ENCODE measurements at regions of chr1 and their contacts with region 1.

Region 1: DNA sequence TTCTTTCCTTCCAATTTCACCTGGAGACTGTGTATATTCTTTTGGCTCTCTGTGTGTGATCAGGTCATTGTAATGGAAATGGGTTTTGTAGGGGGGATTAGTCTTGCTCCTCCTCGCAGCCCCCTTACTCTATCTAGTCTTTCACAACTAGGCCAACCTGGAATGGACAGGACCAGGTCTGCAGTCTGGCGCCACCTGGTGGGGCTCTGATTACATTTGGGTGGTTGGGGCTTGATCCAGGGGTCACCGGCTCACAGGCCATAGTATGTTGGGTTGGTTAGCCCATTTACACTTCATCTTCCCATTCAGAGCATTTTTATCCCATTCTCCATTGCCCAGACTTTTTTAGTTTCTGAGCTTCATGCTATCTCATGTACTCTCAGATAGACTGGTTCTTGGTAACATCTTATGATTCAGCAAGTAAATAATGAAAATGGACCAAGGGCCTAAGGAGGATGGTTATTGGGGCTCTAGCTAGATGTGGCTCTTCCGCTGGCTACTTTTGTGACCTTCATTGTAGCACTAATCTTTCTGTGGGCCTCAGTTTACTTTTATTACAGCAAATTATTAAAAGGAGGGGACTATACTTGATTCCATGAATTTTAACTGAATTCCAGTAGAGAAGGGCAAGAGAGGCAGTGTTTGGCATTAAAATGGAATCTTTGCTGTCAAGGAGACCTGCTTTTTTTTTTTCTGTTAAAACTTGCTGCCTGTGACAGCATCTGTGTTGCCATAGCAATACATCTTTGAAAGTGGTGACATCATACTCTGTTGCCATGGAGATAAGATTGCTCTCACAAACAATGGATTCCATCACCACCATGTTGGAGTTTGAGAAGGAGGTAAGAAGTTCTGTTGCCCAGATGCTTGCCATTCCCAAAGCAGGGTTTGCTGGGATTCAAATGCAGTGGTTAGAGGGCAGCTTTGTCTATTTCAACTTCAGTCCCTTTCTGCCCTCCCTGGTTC is 150.1 kb downstream of the PLXNA2 start:
- DNase-seq: no peak
- ATAC-seq: peak; percentile 95
- H3K4me3 ChIP-seq: no peak overlapping the region
- H3K27ac ChIP-seq: no peak overlapping the region
- H3K4me1 ChIP-seq: no peaks in the 10 kb centered on the region
- H3K27me3 ChIP-seq: no peaks in the 10 kb centered on the region; a peak in 1 of 4 replicates
- CTCF ChIP-seq: peak; percentile 78 to 89 (median 88)
- EP300 ChIP-seq: no peak
- POLR2A ChIP-seq: no peak
- RAD21 ChIP-seq: peak; percentile 59

Region 2: DNA sequence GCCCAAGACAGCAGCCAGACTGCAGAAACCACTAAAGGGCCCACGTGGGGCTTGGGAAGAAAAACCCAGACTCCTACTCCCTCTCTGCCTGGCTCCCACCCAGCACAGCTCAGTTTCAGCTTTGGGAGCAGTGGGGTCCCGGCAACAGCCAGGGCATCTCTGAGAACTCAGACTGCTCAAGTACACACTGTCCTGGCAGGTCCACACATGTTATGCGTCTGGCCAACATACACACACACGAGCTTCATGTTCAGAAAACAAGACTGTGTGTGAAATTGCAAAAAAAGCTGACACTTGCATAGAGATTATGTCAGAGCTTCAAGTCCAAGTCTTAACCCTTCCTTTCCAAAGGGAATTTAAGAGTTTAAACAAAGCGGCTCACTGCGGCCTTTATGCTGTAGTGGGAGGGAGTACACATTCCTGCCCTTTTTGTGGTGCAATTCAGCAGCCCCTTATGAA is 46.5 kb before region 1 on chr1:
- CTCF ChIA-PET with region 1: interaction called, 12 read pairs
- POLR2A ChIA-PET with region 1: interaction called, 4 read pairs
- RAD21 ChIA-PET with region 1: no interaction called
- SMC1A ChIA-PET with region 1: no interaction called
- in situ Hi-C with region 1: no loop called
- intact Hi-C with region 1: no loop called
- DNase-seq: no peak
- ATAC-seq: no peak
- H3K4me3 ChIP-seq: no peak overlapping the region
- H3K27ac ChIP-seq: no peak overlapping the region
- H3K4me1 ChIP-seq: no peaks in the 10 kb centered on the region
- H3K27me3 ChIP-seq: peaks cover 0 to 6% of the 10 kb centered on the region in 2 experiments; a peak in 2 of 4 replicates
- CTCF ChIP-seq: no peak
- EP300 ChIP-seq: no peak
- POLR2A ChIP-seq: no peak
- RAD21 ChIP-seq: no peak

Region 3: GRCh38 chr1:208081972-208082371 is 12.1 kb before region 1 on chr1:
- CTCF ChIA-PET with region 1: interaction called, 11 read pairs
- POLR2A ChIA-PET with region 1: no interaction called
- RAD21 ChIA-PET with region 1: no interaction called
- SMC1A ChIA-PET with region 1: interaction called, 3 read pairs
- in situ Hi-C with region 1: no loop called
- intact Hi-C with region 1: no loop called
- DNase-seq: no peak
- ATAC-seq: no peak
- H3K4me3 ChIP-seq: no peak overlapping the region
- H3K27ac ChIP-seq: no peak overlapping the region
- H3K4me1 ChIP-seq: no peaks in the 10 kb centered on the region; the same call in 1 of the 2 replicates
- H3K27me3 ChIP-seq: no peaks in the 10 kb centered on the region; a peak in 3 of 4 replicates
- CTCF ChIP-seq: no peak
- EP300 ChIP-seq: no peak
- POLR2A ChIP-seq: no peak
- RAD21 ChIP-seq: no peak

Measured in GM12878 (cell line).